Sigmoid colon (tissue), 7 donors: ENCODE measurements at regions of chr4 and their contacts with region 1.

Region 1: DNA sequence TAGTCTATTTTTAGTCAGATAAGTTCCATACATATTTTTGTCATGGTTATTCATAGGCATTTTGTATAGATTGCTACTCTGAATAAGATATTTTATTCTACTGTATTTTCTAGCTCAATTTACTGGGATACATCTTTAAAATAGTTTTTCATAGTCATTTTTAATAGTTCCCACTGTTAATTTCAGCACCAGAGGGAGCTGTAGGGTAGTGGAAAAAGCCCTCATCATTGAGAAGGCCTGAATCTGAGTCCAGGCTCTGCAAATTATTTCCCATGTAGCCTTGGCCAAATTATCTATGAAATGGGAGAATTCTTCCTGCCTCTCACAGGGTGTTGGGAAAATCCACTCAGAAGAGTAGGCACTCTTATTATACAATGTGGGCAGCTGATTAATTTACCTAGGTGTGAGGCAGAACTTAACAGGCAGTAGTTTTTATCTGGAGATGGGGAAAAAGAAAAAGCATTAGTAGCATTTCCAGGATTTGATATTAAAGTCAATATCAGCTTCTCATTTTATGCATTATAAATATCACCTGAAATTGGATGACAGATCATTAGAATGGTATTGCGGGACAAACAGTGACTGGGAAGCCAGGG is 102.9 kb upstream of the PAQR3 start:
- DNase-seq: no peak
- H3K4me3 ChIP-seq: no peak overlapping the region
- H3K27ac ChIP-seq: no peak overlapping the region
- H3K4me1 ChIP-seq: peaks cover 0 to 24% (median 16%) of the 10 kb centered on the region in 4 donors
- H3K27me3 ChIP-seq: no peaks in the 10 kb centered on the region
- CTCF ChIP-seq: peak; percentile 33 to 73 (median 54)
- EP300 ChIP-seq: no peak
- POLR2A ChIP-seq: no peak

Region 2: GRCh38 chr4:79576429-79576753 is 534.2 kb after region 1 on chr4:
- intact Hi-C with region 1: loop called (anchors 1 kb)
- DNase-seq: no peak
- H3K4me3 ChIP-seq: no peak overlapping the region
- H3K27ac ChIP-seq: peak overlapping the region in 3 of 4 donors; percentile 0 to 61 (median 54)
- H3K4me1 ChIP-seq: peaks cover 0 to 19% (median 9%) of the 10 kb centered on the region in 4 donors
- H3K27me3 ChIP-seq: no peaks in the 10 kb centered on the region
- CTCF ChIP-seq: peak in 3 of 4 experiments; percentile 31 to 39 (median 36)
- EP300 ChIP-seq: no peak
- POLR2A ChIP-seq: no peak

Region 3: DNA sequence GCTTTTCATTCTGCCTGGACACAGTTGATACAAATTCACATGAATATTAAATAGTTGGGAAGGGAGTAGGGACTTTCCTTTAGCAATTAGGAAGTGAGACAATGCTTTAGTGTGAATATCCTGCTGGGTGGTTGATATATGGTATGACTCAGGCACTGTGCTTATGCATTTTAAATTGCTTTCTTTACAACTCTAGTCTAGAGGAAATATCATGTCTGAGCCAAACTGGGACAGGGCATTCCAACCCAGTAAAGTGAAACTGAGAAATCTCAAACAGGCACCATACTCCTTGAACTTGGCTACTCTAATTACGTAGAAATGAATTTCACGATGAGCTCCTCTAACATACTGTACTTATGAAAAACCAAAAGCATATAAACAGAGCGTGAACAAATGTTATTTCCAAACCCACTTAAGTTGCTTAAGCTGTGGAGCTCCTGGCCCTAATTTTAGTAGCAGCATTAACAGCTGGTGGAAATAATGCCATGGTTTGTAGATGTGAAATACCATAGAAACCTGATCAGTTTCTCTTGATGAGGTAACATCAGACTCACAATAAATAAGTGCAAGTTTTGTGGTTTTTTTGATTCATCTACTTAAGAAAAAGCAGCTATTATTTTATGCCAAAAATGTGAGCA is 608.7 kb after region 1 on chr4:
- intact Hi-C with region 1: loop called (anchors 10 kb)
- DNase-seq: no peak
- H3K4me3 ChIP-seq: no peak overlapping the region
- H3K27ac ChIP-seq: peak overlapping the region; percentile 59 to 79 (median 70)
- H3K4me1 ChIP-seq: peaks cover 0 to 46% (median 24%) of the 10 kb centered on the region in 4 donors
- H3K27me3 ChIP-seq: no peaks in the 10 kb centered on the region
- CTCF ChIP-seq: no peak
- EP300 ChIP-seq: peak in 2 of 4 donors; percentile 31 to 37
- POLR2A ChIP-seq: no peak

Region 4: GRCh38 chr4:79823148-79823763 is 781.1 kb after region 1 on chr4:
- intact Hi-C with region 1: loop called (anchors 10 kb)
- DNase-seq: peak; percentile 89
- H3K4me3 ChIP-seq: no peak overlapping the region
- H3K27ac ChIP-seq: peak overlapping the region; percentile 71 to 83 (median 80)
- H3K4me1 ChIP-seq: peaks cover 0 to 24% (median 19%) of the 10 kb centered on the region in 4 donors
- H3K27me3 ChIP-seq: no peaks in the 10 kb centered on the region
- CTCF ChIP-seq: no peak
- EP300 ChIP-seq: peak; percentile 46 to 90 (median 59)
- POLR2A ChIP-seq: no peak

Region 5: DNA sequence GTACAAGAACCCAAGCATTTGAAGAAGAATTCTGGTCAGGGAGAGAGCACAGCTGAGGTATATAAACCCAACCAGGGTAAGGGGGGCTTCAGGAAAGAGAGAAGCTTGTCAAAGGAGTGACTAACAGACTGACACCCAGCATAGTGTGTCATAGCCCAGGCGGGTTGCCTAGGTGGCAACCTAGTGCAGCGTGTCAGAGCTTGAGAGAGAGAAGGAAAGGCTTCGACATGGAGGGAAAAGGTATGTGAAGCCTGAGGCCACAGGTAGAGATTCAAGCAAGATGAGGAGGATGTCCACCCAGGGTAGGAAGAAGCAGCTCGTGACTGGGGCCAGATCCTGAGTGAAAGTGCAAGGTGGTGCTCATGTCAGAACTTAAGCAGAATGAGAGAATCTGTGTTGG is 1039.4 kb after region 1 on chr4:
- intact Hi-C with region 1: no loop called
- DNase-seq: no peak
- H3K4me3 ChIP-seq: no peak overlapping the region
- H3K27ac ChIP-seq: no peak overlapping the region
- H3K4me1 ChIP-seq: no peaks in the 10 kb centered on the region
- H3K27me3 ChIP-seq: no peaks in the 10 kb centered on the region
- CTCF ChIP-seq: no peak
- EP300 ChIP-seq: no peak
- POLR2A ChIP-seq: no peak

Region 6: DNA sequence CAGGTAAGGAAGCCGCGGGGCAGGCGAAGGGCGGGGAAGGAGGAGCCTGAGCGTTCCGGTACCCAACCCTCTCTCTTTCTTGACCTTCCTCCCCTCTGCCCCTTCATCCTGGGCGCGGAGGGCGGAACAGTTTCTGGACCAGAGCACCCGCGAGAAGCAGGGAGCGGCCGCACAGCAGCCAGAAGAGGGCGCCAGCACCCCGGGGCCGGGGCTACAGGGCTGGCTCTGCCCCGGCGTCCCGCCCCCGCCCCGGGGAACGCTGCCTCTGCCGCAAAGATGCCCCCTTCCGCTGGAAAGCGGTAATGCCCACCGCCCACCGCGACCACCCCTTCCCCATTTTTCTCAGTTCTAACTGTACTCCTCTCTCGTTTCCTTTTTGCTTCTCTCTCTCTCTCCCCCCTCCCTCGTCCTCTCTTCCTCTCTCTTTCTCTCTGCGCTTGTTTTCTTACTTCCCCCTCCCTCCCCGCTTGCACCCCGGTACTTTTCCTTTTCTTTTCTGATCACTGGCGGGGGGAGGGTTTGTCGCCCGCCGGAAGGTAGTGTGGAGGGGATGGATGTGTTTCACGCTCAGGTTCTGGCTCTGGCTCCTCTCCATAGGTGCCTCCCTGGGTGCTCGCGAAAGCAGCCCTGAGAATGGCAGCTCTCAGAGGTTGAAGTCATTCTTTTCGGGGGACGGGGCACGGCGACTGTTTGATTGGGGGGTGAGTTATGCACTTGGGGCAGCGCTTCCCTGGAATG is 1142.0 kb after region 1 on chr4:
- intact Hi-C with region 1: loop called (anchors 2 kb)
- DNase-seq: peak; percentile 95
- H3K4me3 ChIP-seq: peak overlapping the region; percentile 55 to 80 (median 71)
- H3K27ac ChIP-seq: peak overlapping the region; percentile 76 to 86 (median 85)
- H3K4me1 ChIP-seq: peaks cover 0 to 29% (median 19%) of the 10 kb centered on the region in 4 donors
- H3K27me3 ChIP-seq: no peaks in the 10 kb centered on the region
- CTCF ChIP-seq: peak; percentile 89 to 95 (median 92)
- EP300 ChIP-seq: no peak
- POLR2A ChIP-seq: no peak

Region 7: GRCh38 chr4:80215449-80216052 is 1173.4 kb after region 1 on chr4:
- intact Hi-C with region 1: loop called (anchors 5 kb)
- DNase-seq: no peak
- H3K4me3 ChIP-seq: peak overlapping the region in 1 of 4 donors; percentile 10
- H3K27ac ChIP-seq: no peak overlapping the region
- H3K4me1 ChIP-seq: peaks cover 0 to 7% (median 0%) of the 10 kb centered on the region in 4 donors
- H3K27me3 ChIP-seq: no peaks in the 10 kb centered on the region
- CTCF ChIP-seq: peak; percentile 23 to 70 (median 46)
- EP300 ChIP-seq: no peak
- POLR2A ChIP-seq: no peak